Heart right ventricle (tissue), 16 donors: ENCODE measurements at regions of chr5 and their contacts with region 1.

Region 1: DNA sequence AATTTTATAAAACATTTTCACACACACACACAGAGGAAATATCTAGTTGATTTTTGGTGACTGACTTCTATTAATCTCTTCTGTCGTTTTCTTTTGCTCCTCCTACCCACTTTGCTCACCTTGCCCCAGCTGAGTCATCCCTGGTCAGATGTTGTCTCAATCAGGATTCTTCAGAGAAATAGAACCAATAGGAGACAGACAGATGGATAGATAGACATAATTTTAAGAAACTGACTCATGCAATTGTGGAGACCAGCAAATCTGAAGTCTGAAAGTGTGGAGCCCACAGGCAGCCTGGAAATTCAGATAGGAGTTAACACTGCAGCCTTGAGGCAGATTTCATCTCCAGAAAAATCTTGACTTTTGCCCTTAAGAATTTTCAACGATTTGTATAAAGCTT is 37.0 kb upstream of the PIK3R1 start:
- DNase-seq: no peak
- ATAC-seq: no peak
- H3K4me3 ChIP-seq: no peak overlapping the region
- H3K27ac ChIP-seq: no peak overlapping the region
- H3K4me1 ChIP-seq: peaks cover 0 to 4% (median 0%) of the 10 kb centered on the region in 9 donors
- H3K27me3 ChIP-seq: no peaks in the 10 kb centered on the region
- CTCF ChIP-seq: no peak

Region 2: DNA sequence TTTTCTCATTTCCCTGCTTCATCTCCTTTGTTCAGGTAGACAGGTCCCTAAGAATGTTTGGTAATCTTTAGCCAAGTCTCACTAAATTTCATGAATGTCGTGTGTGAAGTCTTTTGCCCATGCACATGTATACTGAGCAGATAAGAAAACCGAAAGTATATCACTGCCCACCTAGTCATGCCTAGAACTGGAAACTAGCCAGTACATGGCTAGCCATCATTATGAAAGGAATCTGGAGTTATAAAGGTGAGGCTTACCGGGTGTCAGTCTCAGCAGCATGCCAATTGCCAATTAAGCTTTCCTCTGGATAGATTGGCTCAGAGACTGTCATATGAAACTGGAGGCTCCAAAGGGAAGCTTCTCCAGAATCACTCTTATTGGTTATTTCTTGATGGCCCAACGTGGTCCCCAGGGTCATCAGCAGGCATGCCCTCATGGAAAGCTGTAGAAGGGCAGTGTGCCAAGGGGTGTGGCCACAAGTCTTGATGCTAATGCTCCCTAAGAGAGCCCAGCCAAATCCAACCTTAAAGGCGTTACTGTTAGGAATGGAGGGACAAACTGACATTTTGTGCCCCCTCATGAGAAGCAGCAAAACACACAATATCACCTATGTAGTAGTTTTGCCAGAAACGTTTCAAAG is 270.3 kb before region 1 on chr5:
- intact Hi-C with region 1: loop called in 1 of 10 experiments (anchors 5 kb)
- DNase-seq: no peak
- ATAC-seq: no peak
- H3K4me3 ChIP-seq: no peak overlapping the region
- H3K27ac ChIP-seq: no peak overlapping the region
- H3K4me1 ChIP-seq: peaks cover 0 to 23% (median 11%) of the 10 kb centered on the region in 9 donors
- H3K27me3 ChIP-seq: no peaks in the 10 kb centered on the region
- CTCF ChIP-seq: no peak